Caco-2 (cell line): ENCODE measurements at regions of chr22 and their contacts with region 1.

Region 1: DNA sequence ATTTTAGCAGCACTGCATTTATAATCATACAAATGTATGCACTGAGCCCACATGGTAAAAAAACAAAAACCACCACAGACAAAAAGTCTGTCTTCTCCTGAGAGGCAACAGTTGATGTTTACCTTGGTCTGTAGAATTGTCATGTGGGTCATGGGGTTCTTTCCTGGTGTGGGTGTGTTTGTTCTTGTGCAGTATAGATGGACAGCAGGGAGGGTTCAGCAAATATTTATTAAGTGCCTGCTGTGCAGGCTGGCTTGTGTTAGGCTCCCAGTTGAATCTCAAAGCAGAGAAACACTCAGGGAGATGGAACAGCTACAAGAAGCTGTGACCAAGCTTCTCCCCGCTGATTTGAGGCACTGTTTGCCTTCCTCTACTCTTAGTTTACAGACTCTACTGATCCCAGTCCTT is 82.2 kb downstream of the PISD start:
- DNase-seq: peak; percentile 36 to 42
- H3K4me3 ChIP-seq: no peak overlapping the region
- H3K4me3 Mint-ChIP-seq: no peak overlapping the region
- H3K27ac Mint-ChIP-seq: peak overlapping the region; percentile 36
- H3K4me1 ChIP-seq: peaks cover 48% of the 10 kb centered on the region
- H3K4me1 Mint-ChIP-seq: peaks cover 32% of the 10 kb centered on the region
- H3K27me3 ChIP-seq: no peaks in the 10 kb centered on the region
- H3K27me3 Mint-ChIP-seq: no peaks in the 10 kb centered on the region
- CTCF ChIP-seq: no peak

Region 2: DNA sequence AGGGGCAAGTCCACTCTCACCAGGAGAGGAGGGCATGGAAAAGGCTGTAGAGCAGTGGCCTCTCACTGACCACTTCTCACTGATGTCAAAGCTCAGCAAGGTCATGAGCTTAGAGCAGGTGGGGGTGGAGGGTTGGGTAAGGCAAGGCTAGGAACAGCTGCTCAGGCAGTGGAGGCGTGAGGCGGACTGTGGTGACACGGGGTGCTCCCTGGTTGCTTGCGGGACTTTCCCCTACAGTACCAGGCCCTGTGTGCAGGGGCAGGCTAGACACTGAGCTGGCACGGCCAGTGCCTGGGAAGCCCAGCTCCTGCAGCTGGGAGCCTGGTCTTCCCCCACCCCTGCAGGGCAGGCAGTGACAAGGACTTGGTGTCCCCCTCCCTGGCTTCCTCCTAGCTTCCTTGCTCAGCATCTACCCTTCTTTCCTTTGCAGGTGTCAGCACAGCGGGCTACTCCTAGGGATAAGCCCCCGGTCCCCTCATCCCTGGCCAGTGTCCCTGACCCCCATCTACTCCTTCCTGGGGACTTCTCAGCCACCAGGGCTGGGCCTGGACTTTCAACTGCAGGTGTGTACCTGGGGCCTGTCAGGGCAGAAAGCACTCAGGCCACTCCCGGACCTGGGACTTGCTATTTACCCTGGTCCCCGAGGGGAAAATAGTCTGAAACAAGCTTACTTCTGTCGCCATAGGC is 36.6 kb after region 1 on chr22:
- CTCF ChIA-PET with region 1: no interaction called
- POLR2A ChIA-PET with region 1: no interaction called
- intact Hi-C with region 1: loop called (anchors 5 kb)
- DNase-seq: no peak
- H3K4me3 ChIP-seq: no peak overlapping the region
- H3K4me3 Mint-ChIP-seq: no peak overlapping the region
- H3K27ac Mint-ChIP-seq: peak overlapping the region; percentile 25
- H3K4me1 ChIP-seq: peaks cover 13% of the 10 kb centered on the region
- H3K4me1 Mint-ChIP-seq: no peaks in the 10 kb centered on the region
- H3K27me3 ChIP-seq: no peaks in the 10 kb centered on the region
- H3K27me3 Mint-ChIP-seq: no peaks in the 10 kb centered on the region
- CTCF ChIP-seq: no peak